ENCODE measurements at regions of chr2 and their contacts with region 1.

Region 1: DNA sequence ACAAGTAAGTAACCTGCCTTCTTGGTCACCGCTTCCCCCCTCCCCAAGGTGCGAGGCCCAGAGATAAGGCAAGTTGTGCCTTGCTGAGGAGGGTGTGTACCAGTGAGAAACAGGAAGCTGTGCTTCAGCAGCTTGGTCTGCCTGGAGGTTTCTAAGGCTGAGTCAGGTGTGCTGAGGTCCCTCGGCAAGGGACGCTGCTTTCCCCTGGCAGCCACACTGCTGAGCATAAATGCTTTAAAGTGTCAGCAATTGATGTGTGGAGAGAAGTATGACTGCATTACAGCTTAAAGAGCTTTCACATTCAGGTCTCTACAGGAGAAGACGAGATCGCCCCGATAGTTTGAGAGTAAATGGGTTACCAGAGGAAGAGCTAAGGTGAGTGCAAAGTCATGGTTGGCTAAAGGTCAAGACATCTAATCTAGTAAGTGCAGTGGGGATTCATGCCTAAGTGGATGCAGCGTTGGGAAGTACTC is 86.9 kb downstream of the LIMS1 start:
- DNase-seq: peak; percentile 40

Region 2: DNA sequence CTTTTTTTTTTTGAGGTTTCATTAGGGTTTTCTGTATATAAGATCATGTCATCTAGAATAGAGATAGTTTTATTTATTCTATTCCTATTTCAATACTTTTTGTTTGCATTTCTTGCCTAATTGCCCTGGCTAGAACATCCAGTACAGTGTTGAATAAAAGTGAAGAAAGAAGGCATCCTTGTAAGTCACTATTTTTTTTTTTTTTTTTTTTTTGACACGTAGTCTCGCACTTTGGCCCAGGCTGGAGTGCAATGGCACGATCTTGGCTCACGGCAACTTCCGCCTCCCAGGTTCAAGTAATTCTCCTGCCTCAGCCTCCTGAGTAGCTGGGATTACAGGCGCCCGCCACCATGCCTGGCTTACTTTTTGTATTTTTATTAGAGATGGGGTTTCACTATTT is 70.3 kb after region 1 on chr2:
- CTCF ChIA-PET with region 1: interaction called, 10 read pairs
- POLR2A ChIA-PET with region 1: no interaction called
- DNase-seq: no peak

Measured in HEK293T (cell line).